Left colon (tissue), 2 donors: ENCODE measurements at regions of chr6 and their contacts with region 1.

Region 1: GRCh38 chr6:129498950-129499842 is 210.8 kb downstream of the ARHGAP18 start:
- DNase-seq: peak in 1 of 2 donors; percentile 18
- ATAC-seq: peak; percentile 83

Region 2: GRCh38 chr6:129536271-129536670 is 37.1 kb after region 1 on chr6:
- intact Hi-C with region 1: no loop called
- DNase-seq: no peak
- ATAC-seq: no peak

Region 3: DNA sequence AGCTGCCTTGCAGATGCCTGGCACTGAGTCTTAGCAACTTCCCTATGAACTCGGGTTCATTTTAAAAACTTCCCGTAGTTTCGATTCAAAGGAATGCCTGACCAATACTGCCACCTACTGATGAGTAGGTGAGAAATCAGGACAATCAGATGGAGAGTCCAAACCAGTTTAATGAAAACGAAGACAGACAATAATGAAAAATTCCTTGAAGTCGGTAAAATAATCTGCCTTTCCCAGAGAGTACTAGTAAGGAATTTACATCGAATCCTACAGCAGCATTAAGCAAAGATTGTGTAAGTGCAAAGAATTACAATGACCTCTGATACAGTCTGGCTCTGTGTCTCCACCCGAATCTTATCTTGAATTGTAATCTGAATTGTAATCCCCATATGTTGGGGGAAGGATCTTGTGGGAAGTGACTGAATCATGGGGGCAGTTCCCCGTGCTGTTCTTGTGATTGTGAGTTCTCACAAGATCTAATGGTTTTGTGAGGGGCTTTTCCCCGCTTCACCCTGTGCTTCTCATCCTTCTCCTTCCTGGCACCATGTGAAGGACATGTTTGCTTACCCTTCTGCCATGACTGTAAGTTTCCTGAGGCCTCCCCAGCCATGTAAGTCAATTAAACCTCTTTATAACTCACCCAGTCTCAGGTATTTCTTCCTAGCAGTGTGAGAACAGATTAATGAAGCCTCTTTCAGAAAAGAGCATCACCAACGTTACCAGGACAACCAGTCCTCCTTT is 76.4 kb after region 1 on chr6:
- intact Hi-C with region 1: loop called in 1 of 2 experiments (anchors 5 kb)
- DNase-seq: no peak
- ATAC-seq: peak; percentile 88